Mucosa of descending colon (tissue), 3 donors: ENCODE measurements at regions of chr9 and their contacts with region 1.

Region 1: GRCh38 chr9:100028201-100028784 is 70.5 kb downstream of the ERP44 start:
- DNase-seq: peak in 2 of 3 donors; percentile 61 to 83
- ATAC-seq: peak; percentile 91
- H3K4me3 ChIP-seq: no peak overlapping the region
- H3K4me1 ChIP-seq: no peaks in the 10 kb centered on the region
- CTCF ChIP-seq: peak; percentile 84

Region 2: GRCh38 chr9:99948896-99949295 is 79.4 kb before region 1 on chr9:
- intact Hi-C with region 1: no loop called
- DNase-seq: peak in 1 of 3 donors; percentile 43
- ATAC-seq: peak; percentile 64
- H3K4me3 ChIP-seq: no peak overlapping the region
- H3K4me1 ChIP-seq: peaks cover 3% of the 10 kb centered on the region
- CTCF ChIP-seq: no peak

Region 3: DNA sequence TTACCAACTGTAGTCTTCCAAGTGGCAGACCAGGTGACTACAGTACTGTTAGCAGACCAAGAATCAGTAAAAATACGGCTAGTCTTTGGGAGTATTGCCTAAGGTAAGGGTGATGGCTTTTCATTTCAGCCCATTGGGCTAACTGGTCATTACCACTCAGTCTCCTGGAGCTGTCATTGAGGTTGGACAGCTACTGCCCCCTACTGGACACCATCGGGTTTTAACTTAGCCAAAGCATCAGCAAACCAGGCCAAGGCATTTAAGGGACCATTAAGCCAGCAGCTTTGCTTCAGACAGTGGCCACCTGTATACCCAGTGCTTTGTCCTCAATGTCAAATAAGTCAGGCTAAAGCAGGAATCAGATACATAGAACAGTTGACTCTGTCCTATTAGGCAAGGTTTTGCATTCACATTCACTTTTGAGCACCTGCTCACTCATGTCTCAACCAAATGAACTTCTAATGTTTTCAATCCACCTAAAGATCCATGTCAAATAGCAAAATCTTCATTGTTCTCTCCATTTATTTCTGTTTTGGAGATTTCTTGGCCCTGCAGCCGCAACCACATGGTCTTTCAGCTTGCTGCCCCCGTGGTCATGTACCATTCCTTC is 188.0 kb after region 1 on chr9:
- intact Hi-C with region 1: loop called in 1 of 2 experiments (anchors 5 kb)
- DNase-seq: peak in 2 of 3 donors; percentile 31 to 82
- ATAC-seq: peak; percentile 87
- H3K4me3 ChIP-seq: no peak overlapping the region
- H3K4me1 ChIP-seq: no peaks in the 10 kb centered on the region
- CTCF ChIP-seq: peak; percentile 49